ENCODE measurements at regions of chr16 and their contacts with region 1.

Region 1: DNA sequence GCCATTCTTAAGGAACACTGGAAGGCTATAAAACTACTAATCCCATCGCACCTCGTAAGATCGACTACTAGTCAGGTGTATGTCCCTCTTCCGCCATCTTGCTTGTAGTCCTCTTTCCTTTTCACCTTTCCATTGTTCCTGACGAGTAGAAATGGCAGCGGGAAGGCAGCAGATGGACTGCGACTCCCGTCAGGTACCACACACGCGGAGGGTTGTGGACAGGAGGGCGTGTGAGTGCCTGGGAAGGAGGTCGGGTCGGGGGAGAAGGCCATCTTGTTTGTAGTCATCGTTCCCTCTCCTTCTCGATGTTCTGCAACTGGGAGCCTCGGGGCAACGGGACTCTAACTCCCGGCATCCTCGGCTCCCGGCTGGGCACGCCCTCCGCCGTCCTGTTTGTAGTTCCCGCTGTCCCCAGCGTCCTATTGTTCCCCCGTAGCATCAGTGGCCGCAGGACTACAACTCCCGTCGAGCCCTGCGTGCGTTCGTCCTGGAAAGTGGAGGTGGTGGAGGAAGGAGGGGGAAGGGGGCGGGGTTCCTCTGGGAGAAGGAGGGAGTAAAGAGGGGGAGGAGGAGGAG is 324 bp upstream of the FBXL19 start:
- DNase-seq: peak; percentile 99
- H3K4me3 Mint-ChIP-seq: peak overlapping the region; percentile 99
- H3K27ac Mint-ChIP-seq: peak overlapping the region; percentile 100
- H3K4me1 Mint-ChIP-seq: peaks cover 14% of the 10 kb centered on the region
- H3K27me3 Mint-ChIP-seq: no peaks in the 10 kb centered on the region

Region 2: GRCh38 chr16:30650369-30651123 is 272.5 kb before region 1 on chr16 and contains the start of gene PRR14:
- CTCF ChIA-PET with region 1: no interaction called
- intact Hi-C with region 1: loop called (anchors 1 kb)
- DNase-seq: peak; percentile 100
- H3K4me3 Mint-ChIP-seq: peak within 1 kb of the TSS; percentile 85
- H3K27ac Mint-ChIP-seq: peak within 1 kb of the TSS; percentile 91
- H3K4me1 Mint-ChIP-seq: peaks cover 22% of the 10 kb centered on the region
- H3K27me3 Mint-ChIP-seq: no peaks in the 10 kb centered on the region
- total RNA-seq, gene PRR14: 50.6 to 52.4 TPM

Region 3: GRCh38 chr16:30775392-30776188 is 147.5 kb before region 1 on chr16:
- CTCF ChIA-PET with region 1: no interaction called
- intact Hi-C with region 1: loop called (anchors 1 kb)
- DNase-seq: peak; percentile 78
- H3K4me3 Mint-ChIP-seq: peak overlapping the region; percentile 95
- H3K27ac Mint-ChIP-seq: peak overlapping the region; percentile 93
- H3K4me1 Mint-ChIP-seq: peaks cover 17% of the 10 kb centered on the region
- H3K27me3 Mint-ChIP-seq: no peaks in the 10 kb centered on the region

Region 4: DNA sequence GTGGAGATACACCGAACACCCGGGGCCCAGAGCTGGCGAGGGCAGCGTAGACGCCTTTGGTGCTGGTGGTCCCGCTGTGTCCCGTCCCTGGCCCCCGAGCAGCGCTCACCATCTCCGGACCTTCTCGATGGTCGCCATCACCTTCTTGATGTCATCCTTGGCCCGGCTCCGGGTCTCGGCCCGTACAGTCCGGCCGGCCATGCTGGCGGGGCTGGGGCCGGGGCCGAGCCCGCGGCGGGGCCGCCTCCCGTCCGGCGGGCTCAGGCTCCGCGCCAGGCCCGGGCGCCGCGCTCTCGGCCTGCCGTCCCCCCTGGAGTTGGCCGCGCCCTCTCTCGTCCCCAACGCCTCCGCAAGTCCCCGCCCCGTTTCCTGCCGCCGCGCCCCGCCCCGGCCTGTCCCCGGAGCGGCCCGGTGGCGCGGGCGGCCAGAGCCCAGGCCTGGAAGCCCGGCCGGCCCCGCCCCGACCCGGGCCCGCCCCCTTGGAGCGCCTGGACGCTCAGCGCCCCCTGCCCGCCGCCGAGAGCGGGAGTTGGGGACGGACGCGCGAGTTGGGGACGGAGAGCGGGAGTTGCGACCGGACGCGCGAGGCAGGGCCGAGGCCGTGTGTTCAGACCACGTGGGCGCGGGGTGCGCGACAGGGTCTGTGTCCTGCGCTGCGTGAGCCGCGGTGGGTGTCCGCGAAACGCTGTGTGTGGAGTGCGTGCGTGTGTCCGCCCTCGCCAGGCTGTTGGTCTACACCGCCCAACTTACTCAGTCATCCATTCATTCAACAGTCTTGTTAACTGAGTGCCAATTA is 29.1 kb before region 1 on chr16 and contains the start of gene BCL7C:
- CTCF ChIA-PET with region 1: no interaction called
- intact Hi-C with region 1: loop called (anchors 1 kb)
- DNase-seq: peak; percentile 90
- H3K4me3 Mint-ChIP-seq: peak within 1 kb of the TSS; percentile 84
- H3K27ac Mint-ChIP-seq: peak within 1 kb of the TSS; percentile 78
- H3K4me1 Mint-ChIP-seq: peaks cover 39% of the 10 kb centered on the region
- H3K27me3 Mint-ChIP-seq: no peaks in the 10 kb centered on the region
- total RNA-seq, gene BCL7C: 18.1 to 18.6 TPM

Region 5: GRCh38 chr16:31032736-31033708 is 110.0 kb after region 1 on chr16 and contains the start of gene STX4:
- CTCF ChIA-PET with region 1: no interaction called
- intact Hi-C with region 1: loop called (anchors 1 kb)
- DNase-seq: peak; percentile 99
- H3K4me3 Mint-ChIP-seq: peak within 1 kb of the TSS; percentile 96
- H3K27ac Mint-ChIP-seq: peak within 1 kb of the TSS; percentile 93
- H3K4me1 Mint-ChIP-seq: peaks cover 22% of the 10 kb centered on the region
- H3K27me3 Mint-ChIP-seq: no peaks in the 10 kb centered on the region
- total RNA-seq, gene STX4: 32.9 to 38.0 TPM

Region 6: GRCh38 chr16:31458844-31459721 is 536.0 kb after region 1 on chr16 and contains the start of gene ARMC5:
- CTCF ChIA-PET with region 1: no interaction called
- intact Hi-C with region 1: loop called (anchors 1 kb)
- DNase-seq: peak; percentile 99
- H3K4me3 Mint-ChIP-seq: peak within 1 kb of the TSS; percentile 87
- H3K27ac Mint-ChIP-seq: peak within 1 kb of the TSS; percentile 94
- H3K4me1 Mint-ChIP-seq: peaks cover 41% of the 10 kb centered on the region
- H3K27me3 Mint-ChIP-seq: no peaks in the 10 kb centered on the region
- total RNA-seq, gene ARMC5: 6.3 to 6.7 TPM

Measured in activated naive CD4-positive, alpha-beta T cell treated with anti-CD3 and anti-CD28 coated beads for 36 hours (primary cell).